ENCODE measurements at regions of chr7 and their contacts with region 1.

Region 1: DNA sequence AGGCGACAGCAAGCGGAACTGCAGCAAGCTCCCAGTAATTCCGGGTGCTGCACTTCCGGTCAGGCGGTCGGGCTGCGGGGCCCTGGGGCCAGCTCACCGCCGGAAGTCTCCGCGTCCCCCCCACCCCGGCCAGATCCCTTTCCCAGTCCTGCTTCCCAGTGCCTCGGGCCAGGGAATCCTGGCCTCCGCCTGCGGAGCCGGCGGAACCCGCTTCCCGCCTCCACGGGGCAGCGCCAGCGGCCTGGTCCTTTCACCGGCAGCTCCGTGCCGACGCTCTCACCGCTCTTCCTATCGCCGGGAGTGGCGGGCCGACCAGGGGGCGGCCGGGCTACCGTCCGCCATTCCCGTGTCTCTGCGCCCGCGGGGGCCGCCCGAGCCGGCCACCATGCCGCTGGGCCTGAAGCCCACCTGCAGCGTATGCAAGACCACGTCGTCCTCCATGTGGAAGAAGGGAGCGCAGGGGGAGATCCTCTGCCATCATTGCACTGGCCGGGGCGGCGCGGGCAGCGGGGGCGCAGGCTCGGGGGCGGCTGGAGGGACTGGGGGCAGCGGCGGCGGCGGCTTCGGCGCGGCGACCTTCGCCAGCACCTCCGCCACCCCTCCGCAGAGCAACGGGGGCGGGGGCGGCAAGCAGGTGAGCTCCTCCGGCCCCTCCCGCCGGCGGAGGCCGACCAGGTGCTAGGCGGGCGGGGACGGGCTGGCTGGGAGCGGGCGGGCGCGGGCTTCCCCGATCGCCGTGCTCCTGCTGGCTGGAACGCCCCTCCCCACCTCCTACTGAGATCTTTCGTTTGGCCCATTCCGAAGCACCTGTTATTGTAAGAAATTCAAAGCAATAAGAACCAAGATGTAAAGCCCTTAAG is at the start of gene GATAD1:
- H3K4me3 Mint-ChIP-seq: peak within 1 kb of the TSS; percentile 88
- H3K27ac Mint-ChIP-seq: peak within 1 kb of the TSS; percentile 88
- H3K4me1 Mint-ChIP-seq: peaks cover 9% of the 10 kb centered on the region
- H3K27me3 Mint-ChIP-seq: no peaks in the 10 kb centered on the region

Region 2: GRCh38 chr7:91880413-91881241 is 566.9 kb before region 1 on chr7 and contains the start of gene MTERF1:
- intact Hi-C with region 1: loop called (anchors 5 kb)
- H3K4me3 Mint-ChIP-seq: peak within 1 kb of the TSS; percentile 93
- H3K27ac Mint-ChIP-seq: peak within 1 kb of the TSS; percentile 79
- H3K4me1 Mint-ChIP-seq: peaks cover 20% of the 10 kb centered on the region
- H3K27me3 Mint-ChIP-seq: peaks cover 2% of the 10 kb centered on the region

Region 3: GRCh38 chr7:92178927-92179924 is 268.3 kb before region 1 on chr7 and contains the start of gene LRRD1:
- intact Hi-C with region 1: loop called (anchors 5 kb)
- H3K4me3 Mint-ChIP-seq: peak within 1 kb of the TSS; percentile 83
- H3K27ac Mint-ChIP-seq: peak within 1 kb of the TSS; percentile 75
- H3K4me1 Mint-ChIP-seq: peaks cover 14% of the 10 kb centered on the region
- H3K27me3 Mint-ChIP-seq: peaks cover 19% of the 10 kb centered on the region

Region 4: GRCh38 chr7:92423710-92424131 is 23.9 kb before region 1 on chr7:
- intact Hi-C with region 1: loop called (anchors 1 kb)
- H3K4me3 Mint-ChIP-seq: peak overlapping the region; percentile 55
- H3K27ac Mint-ChIP-seq: peak overlapping the region; percentile 69
- H3K4me1 Mint-ChIP-seq: peaks cover 9% of the 10 kb centered on the region
- H3K27me3 Mint-ChIP-seq: peaks cover 2% of the 10 kb centered on the region

Measured in dendritic cell treated with granulocyte-macrophage colony-stimulating factor and Interleukin-4, amounts not matched to agents 40 ng/mL and 50 ng/mL, for 4 days (primary cell).